ENCODE measurements at regions of chr17 and their contacts with region 1.

Region 1: DNA sequence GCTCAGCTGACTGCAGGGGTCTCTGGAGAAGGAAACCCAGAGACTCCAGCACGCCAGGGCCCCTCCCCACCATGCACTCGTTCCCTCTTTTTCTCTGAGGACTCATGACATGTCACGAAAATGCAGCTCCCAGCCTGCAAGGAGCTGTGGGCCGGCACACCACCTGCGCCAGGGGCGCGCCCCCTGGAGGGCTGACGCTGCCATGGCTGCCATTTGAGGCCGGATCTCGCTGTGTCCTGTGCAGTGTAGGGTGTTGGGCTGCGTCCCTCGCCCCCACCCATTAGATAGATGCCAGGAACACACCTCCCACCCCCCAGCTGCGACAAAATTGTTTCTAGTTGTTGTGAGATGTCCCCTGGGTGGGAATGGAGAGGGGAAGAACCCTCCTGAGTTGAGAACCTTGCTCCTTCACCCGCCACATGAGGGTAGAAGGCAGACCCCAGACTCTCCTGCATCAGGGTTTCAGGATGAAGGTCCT is 8.2 kb downstream of the SYNGR2 start:
- DNase-seq: peak; percentile 87
- ATAC-seq: peak; percentile 59
- H3K4me3 ChIP-seq: no peak overlapping the region
- H3K4me3 Mint-ChIP-seq: peak overlapping the region; percentile 44
- H3K27ac ChIP-seq: no peak overlapping the region
- H3K27ac Mint-ChIP-seq: peak overlapping the region; percentile 89
- H3K4me1 ChIP-seq: peaks cover 66 to 67% of the 10 kb centered on the region in 2 donors
- H3K4me1 Mint-ChIP-seq: peaks cover 78% of the 10 kb centered on the region
- H3K27me3 ChIP-seq: no peaks in the 10 kb centered on the region
- H3K27me3 Mint-ChIP-seq: no peaks in the 10 kb centered on the region
- CTCF ChIP-seq: peak; percentile 93

Region 2: GRCh38 chr17:78112518-78113226 is 63.9 kb before region 1 on chr17:
- CTCF ChIA-PET with region 1: interaction called, 169 read pairs
- POLR2A ChIA-PET with region 1: interaction called, 6 read pairs
- intact Hi-C with region 1: loop called (anchors 1 kb)
- DNase-seq: peak; percentile 84
- ATAC-seq: peak; percentile 84
- H3K4me3 ChIP-seq: no peak overlapping the region
- H3K4me3 Mint-ChIP-seq: no peak overlapping the region
- H3K27ac ChIP-seq: peak overlapping the region in 1 of 2 donors; percentile 43
- H3K27ac Mint-ChIP-seq: peak overlapping the region; percentile 96
- H3K4me1 ChIP-seq: peaks cover 12 to 22% of the 10 kb centered on the region in 2 donors
- H3K4me1 Mint-ChIP-seq: peaks cover 24% of the 10 kb centered on the region
- H3K27me3 ChIP-seq: no peaks in the 10 kb centered on the region
- H3K27me3 Mint-ChIP-seq: no peaks in the 10 kb centered on the region
- CTCF ChIP-seq: peak; percentile 98

Region 3: DNA sequence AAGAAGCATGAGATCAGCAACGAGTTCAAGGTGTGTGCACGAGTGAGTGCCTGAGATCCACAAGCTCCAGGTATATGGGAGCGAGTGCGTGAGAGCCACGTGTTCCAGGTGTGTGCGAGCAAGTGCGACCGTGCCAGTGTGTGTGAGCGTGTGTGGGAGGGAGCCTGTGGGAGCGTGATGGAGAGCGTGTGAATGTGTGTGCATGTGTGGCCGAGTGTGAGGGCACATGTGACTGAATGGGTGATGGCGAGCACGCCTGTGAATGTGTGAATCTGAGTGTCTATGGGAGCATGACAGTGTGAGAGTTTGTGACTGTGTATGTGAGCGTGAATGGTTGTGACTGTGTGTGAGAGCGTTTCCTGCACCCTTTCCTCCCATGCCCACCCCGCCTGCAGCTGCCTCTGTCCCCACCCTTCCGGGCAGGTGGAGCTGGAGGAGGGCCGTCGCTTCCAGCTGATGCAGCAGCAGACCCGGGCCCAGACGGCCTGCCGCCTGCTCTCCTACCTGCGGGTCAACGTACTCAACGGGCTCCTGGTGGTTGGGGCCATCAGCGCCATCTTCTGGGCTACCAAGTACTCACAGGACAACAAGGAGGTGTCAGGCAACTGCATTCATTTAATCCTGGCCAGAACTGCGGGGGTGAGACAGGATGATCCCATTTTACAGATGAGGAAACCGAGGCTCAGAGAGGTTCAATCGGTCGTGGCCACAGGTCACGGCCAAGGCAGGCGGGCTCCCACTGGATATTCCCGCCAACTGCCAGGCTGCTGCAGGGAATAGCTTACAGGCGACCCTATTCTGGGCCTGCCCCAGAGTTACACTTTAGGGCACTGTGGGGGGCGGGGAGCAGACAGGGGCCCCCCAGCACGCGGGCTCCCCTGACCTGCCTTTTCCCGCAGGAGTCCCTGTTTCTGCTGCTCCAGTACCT is 42.4 kb before region 1 on chr17:
- CTCF ChIA-PET with region 1: interaction called, 357 read pairs
- POLR2A ChIA-PET with region 1: interaction called, 432 read pairs
- intact Hi-C with region 1: loop called (anchors 1 kb)
- DNase-seq: peak; percentile 90
- ATAC-seq: peak; percentile 7
- H3K4me3 ChIP-seq: peak overlapping the region in 3 of 5 experiments; percentile 6 to 35 (median 23)
- H3K4me3 Mint-ChIP-seq: peak overlapping the region; percentile 99
- H3K27ac ChIP-seq: peak overlapping the region; percentile 88 to 92
- H3K27ac Mint-ChIP-seq: peak overlapping the region; percentile 95
- H3K4me1 ChIP-seq: peaks cover 66 to 88% of the 10 kb centered on the region in 2 donors
- H3K4me1 Mint-ChIP-seq: peaks cover 79% of the 10 kb centered on the region
- H3K27me3 ChIP-seq: no peaks in the 10 kb centered on the region
- H3K27me3 Mint-ChIP-seq: no peaks in the 10 kb centered on the region
- CTCF ChIP-seq: peak; percentile 80

Region 4: GRCh38 chr17:78147315-78147998 is 29.1 kb before region 1 on chr17:
- CTCF ChIA-PET with region 1: interaction called, 357 read pairs
- POLR2A ChIA-PET with region 1: interaction called, 432 read pairs
- intact Hi-C with region 1: no loop called
- DNase-seq: peak; percentile 94
- ATAC-seq: peak; percentile 82
- H3K4me3 ChIP-seq: peak overlapping the region in 1 of 5 experiments; percentile 27
- H3K4me3 Mint-ChIP-seq: peak overlapping the region; percentile 79
- H3K27ac ChIP-seq: peak overlapping the region; percentile 97 to 98
- H3K27ac Mint-ChIP-seq: peak overlapping the region; percentile 95
- H3K4me1 ChIP-seq: peaks cover 69 to 90% of the 10 kb centered on the region in 2 donors
- H3K4me1 Mint-ChIP-seq: peaks cover 73% of the 10 kb centered on the region
- H3K27me3 ChIP-seq: no peaks in the 10 kb centered on the region
- H3K27me3 Mint-ChIP-seq: no peaks in the 10 kb centered on the region
- CTCF ChIP-seq: no peak

Region 5: DNA sequence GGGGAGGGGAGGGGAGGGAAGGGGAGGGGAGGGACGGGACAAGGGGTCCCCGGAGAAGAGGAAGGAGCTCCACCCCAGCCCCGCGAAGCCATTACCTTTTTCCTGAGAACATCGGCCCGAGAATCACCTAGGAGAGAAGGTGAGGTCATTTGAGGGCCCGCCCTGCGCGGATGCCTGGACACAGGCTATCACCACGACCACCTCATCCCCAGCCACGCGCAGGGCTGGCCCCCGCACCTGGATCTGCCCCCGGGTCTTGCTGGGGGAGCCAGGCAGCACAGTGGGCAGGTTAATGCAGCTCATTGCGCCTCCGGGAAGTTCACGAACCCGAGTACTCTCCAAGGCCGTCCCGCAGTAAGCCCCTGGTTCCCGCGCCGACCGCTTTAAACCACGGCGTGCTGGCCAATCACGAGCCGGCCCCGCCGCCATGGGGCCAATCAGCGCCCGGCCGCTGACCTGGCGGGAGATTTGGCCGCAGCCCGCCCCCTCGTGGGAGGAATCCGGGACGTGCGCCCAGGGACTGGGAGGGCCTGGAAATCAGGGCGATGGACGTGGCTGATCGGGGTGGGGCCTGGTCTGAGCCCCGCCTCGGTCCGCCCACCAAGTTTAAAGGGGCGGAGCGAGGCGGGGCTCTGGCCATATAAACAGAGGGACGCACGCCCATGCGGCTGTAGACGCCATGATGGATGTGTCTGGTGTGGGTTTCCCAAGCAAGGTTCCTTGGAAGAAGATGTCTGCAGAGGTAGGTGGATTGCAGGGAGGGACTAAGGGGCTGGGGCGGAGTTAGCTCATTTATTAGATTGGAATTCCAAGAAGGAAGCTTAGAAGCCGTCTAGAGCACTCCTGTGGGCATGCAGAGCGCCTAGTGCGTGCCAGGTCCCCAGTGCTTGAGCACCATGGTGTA is 10.4 kb after region 1 on chr17 and contains the starts of genes AFMID and TK1:
- CTCF ChIA-PET with region 1: interaction called, 32 read pairs
- POLR2A ChIA-PET with region 1: interaction called, 10 read pairs
- intact Hi-C with region 1: no loop called
- DNase-seq: peak; percentile 89
- ATAC-seq: peak; percentile 95
- H3K4me3 ChIP-seq: peak within 1 kb of the TSS; percentile 31 to 77 (median 70)
- H3K4me3 Mint-ChIP-seq: peak within 1 kb of the TSS; percentile 91
- H3K27ac ChIP-seq: no peak within 1 kb of the TSS
- H3K27ac Mint-ChIP-seq: peak within 1 kb of the TSS; percentile 83
- H3K4me1 ChIP-seq: peaks cover 12 to 20% of the 10 kb centered on the region in 2 donors
- H3K4me1 Mint-ChIP-seq: peaks cover 14% of the 10 kb centered on the region
- H3K27me3 ChIP-seq: no peaks in the 10 kb centered on the region
- H3K27me3 Mint-ChIP-seq: no peaks in the 10 kb centered on the region
- CTCF ChIP-seq: peak; percentile 37
- total RNA-seq, gene AFMID: 18.2 and 23.3 TPM in 2 replicates
- total RNA-seq, gene TK1: 1.5 and 2.2 TPM in 2 replicates

Region 6: DNA sequence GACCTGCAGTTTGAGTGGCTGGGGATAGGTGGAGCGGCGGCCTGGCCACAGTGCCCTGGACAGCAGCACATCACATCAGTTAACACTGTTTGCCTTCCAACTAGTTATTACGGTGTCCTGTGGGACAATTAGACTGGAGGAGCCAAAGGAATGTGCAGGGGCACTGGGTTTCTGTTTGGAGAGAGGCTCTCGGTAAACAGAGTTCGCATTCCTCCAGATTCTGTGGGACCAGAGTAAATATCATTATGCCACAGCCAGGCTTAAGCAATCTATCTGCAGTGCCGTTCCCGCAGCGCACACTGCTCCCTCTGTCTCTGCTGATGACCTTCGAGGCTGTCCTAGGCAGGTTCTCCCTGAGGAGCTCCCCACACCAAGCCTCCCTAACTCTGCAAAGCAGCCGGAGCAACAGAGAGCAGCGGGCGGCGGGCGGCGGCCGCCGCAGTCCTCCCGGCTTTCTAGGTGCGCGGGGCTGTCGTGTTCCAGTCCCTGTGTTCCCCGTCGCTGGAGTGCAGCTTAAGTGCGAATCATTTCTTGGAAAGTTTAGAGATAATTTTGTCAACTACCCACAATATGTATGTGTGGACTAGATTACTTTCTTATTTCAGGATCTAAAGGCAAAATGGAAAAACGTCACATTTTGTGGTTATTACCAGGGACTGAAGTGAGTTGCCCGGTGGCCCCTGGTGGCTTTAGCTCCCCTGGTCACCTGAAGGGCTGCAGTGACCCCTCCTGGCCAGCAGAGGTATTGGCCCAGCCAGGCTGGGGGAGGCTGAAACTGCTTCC is 245.1 kb after region 1 on chr17:
- CTCF ChIA-PET with region 1: interaction called, 10 read pairs
- POLR2A ChIA-PET with region 1: no interaction called
- intact Hi-C with region 1: no loop called
- DNase-seq: peak; percentile 82
- ATAC-seq: peak; percentile 96
- H3K4me3 ChIP-seq: no peak overlapping the region
- H3K4me3 Mint-ChIP-seq: no peak overlapping the region
- H3K27ac ChIP-seq: no peak overlapping the region
- H3K27ac Mint-ChIP-seq: no peak overlapping the region
- H3K4me1 ChIP-seq: no peaks in the 10 kb centered on the region
- H3K4me1 Mint-ChIP-seq: peaks cover 1% of the 10 kb centered on the region
- H3K27me3 ChIP-seq: no peaks in the 10 kb centered on the region
- H3K27me3 Mint-ChIP-seq: no peaks in the 10 kb centered on the region
- CTCF ChIP-seq: peak; percentile 99

Measured in B cell (primary cell).